ENCODE measurements at regions of chr12 and their contacts with region 1.

Region 1: DNA sequence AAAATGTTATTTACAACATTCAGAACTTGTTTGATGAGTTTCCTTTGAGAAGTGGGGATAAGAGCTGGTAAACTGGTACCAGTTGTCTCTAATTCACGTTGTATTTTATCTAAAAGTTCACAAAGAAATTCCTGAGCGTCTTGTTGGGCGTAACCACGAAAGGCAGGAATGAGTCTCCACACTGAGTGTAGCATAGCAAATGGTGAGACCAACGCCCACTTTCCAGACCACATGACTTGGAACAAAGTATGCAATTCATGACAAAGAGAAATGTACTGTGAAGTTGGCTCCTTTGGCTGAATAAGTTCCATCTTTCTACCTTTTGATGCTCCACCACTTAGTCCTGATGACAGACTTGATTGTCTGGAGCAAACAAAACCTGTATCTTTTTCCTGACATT is 18.4 kb downstream of the USP44 start:
- H3K4me3 Mint-ChIP-seq: no peak overlapping the region
- H3K27ac Mint-ChIP-seq: no peak overlapping the region
- H3K4me1 Mint-ChIP-seq: peaks cover 6% of the 10 kb centered on the region
- H3K27me3 Mint-ChIP-seq: no peaks in the 10 kb centered on the region

Region 2: DNA sequence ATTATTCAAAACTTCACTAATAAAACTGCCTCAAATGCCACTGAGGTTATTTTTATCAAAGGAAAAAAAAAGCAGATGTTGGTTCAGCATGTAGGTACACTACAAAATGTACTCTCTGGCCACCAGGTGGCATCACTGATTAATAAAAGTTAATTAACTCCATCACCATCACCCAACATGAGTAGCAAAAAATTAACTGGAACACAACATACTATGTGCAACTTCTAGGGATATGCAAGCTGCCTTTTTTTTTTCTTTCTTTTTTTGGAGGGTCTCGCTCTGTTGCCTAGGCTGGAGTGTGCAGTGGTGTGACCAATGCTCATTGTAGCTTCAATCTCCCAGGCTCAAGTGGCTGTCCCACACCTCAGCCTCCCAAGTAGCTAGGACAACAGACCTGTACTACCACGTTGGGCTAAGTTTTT is 415.7 kb before region 1 on chr12:
- intact Hi-C with region 1: loop called (anchors 1 kb)
- H3K4me3 Mint-ChIP-seq: no peak overlapping the region
- H3K27ac Mint-ChIP-seq: no peak overlapping the region
- H3K4me1 Mint-ChIP-seq: no peaks in the 10 kb centered on the region
- H3K27me3 Mint-ChIP-seq: no peaks in the 10 kb centered on the region

Region 3: DNA sequence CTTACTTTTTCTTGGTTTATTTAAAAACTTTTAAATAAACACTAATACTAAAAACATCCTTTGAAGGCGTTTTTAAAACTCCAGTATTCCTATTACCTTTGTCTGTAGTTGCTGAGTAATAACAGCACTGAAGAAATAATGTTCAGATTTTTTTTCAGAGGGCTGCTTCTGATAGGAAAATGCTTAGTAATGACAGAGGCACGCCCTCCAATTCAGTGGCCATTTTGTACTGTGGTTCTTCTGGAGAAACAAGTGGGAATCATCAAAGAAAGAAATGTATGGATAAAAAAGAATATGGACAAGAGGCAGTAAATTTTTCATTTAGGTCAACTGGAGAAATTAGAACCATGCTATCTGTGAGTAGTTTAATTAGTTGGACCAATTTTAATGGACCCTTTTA is 301.7 kb before region 1 on chr12:
- intact Hi-C with region 1: loop called (anchors 5 kb)
- H3K4me3 Mint-ChIP-seq: no peak overlapping the region
- H3K27ac Mint-ChIP-seq: no peak overlapping the region
- H3K4me1 Mint-ChIP-seq: peaks cover 7% of the 10 kb centered on the region
- H3K27me3 Mint-ChIP-seq: no peaks in the 10 kb centered on the region

Region 4: DNA sequence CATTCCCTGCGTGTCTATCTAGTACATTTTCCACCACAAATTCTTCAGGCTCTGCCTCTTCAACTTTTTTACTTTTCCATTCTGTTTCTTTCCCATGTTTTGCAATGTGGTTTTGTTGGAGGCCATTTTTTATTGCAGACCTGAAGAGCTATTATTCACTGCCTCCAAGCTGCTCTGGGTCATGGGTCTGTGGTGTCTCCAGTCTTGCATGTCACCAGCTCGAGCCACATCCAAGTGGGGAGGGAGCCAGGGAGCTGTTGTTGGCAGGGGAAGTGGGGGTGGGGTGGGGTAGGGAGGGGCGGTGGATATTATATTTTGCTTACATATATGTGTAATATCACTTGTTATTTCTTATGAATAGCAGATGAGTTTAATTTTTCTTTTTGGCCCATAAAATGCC is 246.1 kb before region 1 on chr12:
- intact Hi-C with region 1: loop called (anchors 5 kb)
- H3K4me3 Mint-ChIP-seq: no peak overlapping the region
- H3K27ac Mint-ChIP-seq: no peak overlapping the region
- H3K4me1 Mint-ChIP-seq: no peaks in the 10 kb centered on the region
- H3K27me3 Mint-ChIP-seq: no peaks in the 10 kb centered on the region

Measured in dendritic cell treated with granulocyte-macrophage colony-stimulating factor and Interleukin-4, amounts not matched to agents 40 ng/mL and 50 ng/mL, for 4 days (primary cell).